Transverse colon (tissue), 4 donors: ENCODE measurements at regions of chr9 and their contacts with region 1.

Region 1: GRCh38 chr9:115013998-115014397 is 83.6 kb upstream of the TNFSF8 start:
- DNase-seq: peak; percentile 76
- H3K4me3 ChIP-seq: no peak overlapping the region
- H3K27ac ChIP-seq: no peak overlapping the region
- H3K4me1 ChIP-seq: peaks cover 0 to 6% (median 0%) of the 10 kb centered on the region in 4 donors
- H3K27me3 ChIP-seq: no peaks in the 10 kb centered on the region
- CTCF ChIP-seq: peak; percentile 71 to 87 (median 79)
- EP300 ChIP-seq: no peak
- POLR2A ChIP-seq: no peak

Region 2: DNA sequence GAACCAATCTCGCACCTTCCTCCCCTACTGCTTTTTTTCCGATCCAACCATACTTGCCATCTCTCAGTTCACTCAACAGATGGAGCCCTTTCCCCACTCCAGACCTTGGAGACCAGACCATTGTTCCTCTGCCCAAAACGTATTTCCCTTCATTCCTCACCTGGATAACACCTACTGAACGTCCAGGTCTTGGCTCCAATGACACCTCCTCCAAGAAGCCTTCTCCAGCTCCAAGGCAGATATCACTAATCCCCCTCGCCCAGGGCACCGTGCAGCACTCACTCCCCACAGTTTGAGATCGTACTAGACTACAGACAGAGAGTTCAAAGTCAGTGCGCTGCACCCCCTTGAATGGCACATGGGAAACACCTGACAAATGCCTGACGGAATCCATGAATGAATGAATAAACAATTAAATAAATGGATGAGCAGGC is 579.1 kb before region 1 on chr9:
- in situ Hi-C with region 1: loop called in 1 of 4 experiments (anchors 25 kb)
- intact Hi-C with region 1: no loop called
- DNase-seq: no peak
- H3K4me3 ChIP-seq: no peak overlapping the region
- H3K27ac ChIP-seq: no peak overlapping the region
- H3K4me1 ChIP-seq: no peaks in the 10 kb centered on the region
- H3K27me3 ChIP-seq: no peaks in the 10 kb centered on the region
- CTCF ChIP-seq: peak in 4 of 5 experiments; percentile 19 to 29 (median 26)
- EP300 ChIP-seq: no peak
- POLR2A ChIP-seq: no peak

Region 3: GRCh38 chr9:114497236-114497635 is 516.8 kb before region 1 on chr9:
- in situ Hi-C with region 1: no loop called
- intact Hi-C with region 1: no loop called
- DNase-seq: no peak
- H3K4me3 ChIP-seq: no peak overlapping the region
- H3K27ac ChIP-seq: no peak overlapping the region
- H3K4me1 ChIP-seq: peaks cover 0 to 6% (median 3%) of the 10 kb centered on the region in 4 donors
- H3K27me3 ChIP-seq: no peaks in the 10 kb centered on the region
- CTCF ChIP-seq: no peak
- EP300 ChIP-seq: no peak
- POLR2A ChIP-seq: no peak

Region 4: GRCh38 chr9:114687034-114687433 is 327.0 kb before region 1 on chr9:
- in situ Hi-C with region 1: loop called in 1 of 4 experiments (anchors 5 kb)
- intact Hi-C with region 1: loop called (anchors 5 kb)
- DNase-seq: no peak
- H3K4me3 ChIP-seq: no peak overlapping the region
- H3K27ac ChIP-seq: no peak overlapping the region
- H3K4me1 ChIP-seq: no peaks in the 10 kb centered on the region
- H3K27me3 ChIP-seq: no peaks in the 10 kb centered on the region
- CTCF ChIP-seq: no peak
- EP300 ChIP-seq: no peak
- POLR2A ChIP-seq: no peak

Region 5: DNA sequence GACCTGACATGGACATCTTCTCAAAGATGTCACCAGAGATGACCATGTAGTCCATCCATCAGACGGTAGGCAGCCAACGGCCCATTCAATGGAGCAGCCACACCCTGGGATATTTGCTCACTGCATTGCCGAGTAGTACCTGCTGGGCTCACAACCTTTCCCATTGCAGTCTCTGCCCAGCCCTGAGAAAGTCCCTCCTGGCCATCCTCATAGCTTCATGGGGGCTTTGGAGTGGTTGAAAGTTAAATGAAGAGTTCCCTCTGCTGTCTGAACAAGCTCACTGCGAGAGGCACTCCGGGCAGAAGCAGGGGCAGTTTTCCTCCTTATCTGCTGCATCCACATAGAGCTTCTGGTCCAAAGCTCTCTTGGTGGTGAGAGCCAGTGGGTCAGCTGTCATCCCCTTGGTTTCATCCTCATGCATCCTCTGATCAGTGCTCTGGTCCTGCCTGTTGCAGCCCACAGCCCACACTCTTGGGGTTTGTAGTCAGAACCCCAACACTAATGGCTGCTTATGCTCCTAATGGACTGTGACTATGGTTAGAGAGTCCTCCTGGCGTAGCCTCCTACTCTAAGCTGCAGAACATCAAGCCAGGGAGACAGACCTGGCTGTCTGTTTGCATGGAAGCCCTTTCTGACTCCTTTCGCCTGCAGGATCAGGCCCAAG is 107.0 kb before region 1 on chr9:
- in situ Hi-C with region 1: loop called in 3 of 4 experiments (anchors 5 kb)
- intact Hi-C with region 1: no loop called
- DNase-seq: no peak
- H3K4me3 ChIP-seq: no peak overlapping the region
- H3K27ac ChIP-seq: peak overlapping the region in 1 of 4 donors; percentile 40
- H3K4me1 ChIP-seq: peaks cover 0 to 29% (median 9%) of the 10 kb centered on the region in 4 donors
- H3K27me3 ChIP-seq: no peaks in the 10 kb centered on the region
- CTCF ChIP-seq: peak; percentile 29 to 61 (median 41)
- EP300 ChIP-seq: no peak
- POLR2A ChIP-seq: no peak

Region 6: GRCh38 chr9:114958021-114958843 is 55.8 kb before region 1 on chr9:
- in situ Hi-C with region 1: no loop called
- intact Hi-C with region 1: no loop called
- DNase-seq: peak; percentile 17
- H3K4me3 ChIP-seq: no peak overlapping the region
- H3K27ac ChIP-seq: peak overlapping the region in 2 of 4 donors; percentile 18 to 23
- H3K4me1 ChIP-seq: peaks cover 0 to 4% (median 1%) of the 10 kb centered on the region in 4 donors
- H3K27me3 ChIP-seq: no peaks in the 10 kb centered on the region
- CTCF ChIP-seq: no peak
- EP300 ChIP-seq: no peak
- POLR2A ChIP-seq: no peak

Region 7: DNA sequence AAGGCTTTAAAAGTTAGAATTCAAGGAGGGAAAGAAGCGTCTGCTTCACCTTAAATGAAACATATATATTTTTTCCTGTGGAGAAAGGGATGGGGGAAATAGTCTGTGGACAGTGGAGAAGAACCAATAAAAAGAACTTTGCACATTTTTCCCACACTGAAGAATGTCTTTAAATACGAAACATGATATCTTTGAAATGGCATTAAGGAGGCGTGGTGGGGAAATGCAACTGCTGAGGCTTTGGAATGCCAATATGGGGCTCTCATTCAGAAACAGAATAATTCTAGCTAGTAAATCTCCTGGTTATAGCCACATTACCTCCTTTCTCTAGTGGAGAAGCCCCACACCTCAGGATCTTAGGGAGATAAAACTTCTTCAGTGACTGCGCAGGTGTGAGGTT is 57.2 kb after region 1 on chr9:
- in situ Hi-C with region 1: no loop called
- intact Hi-C with region 1: no loop called
- DNase-seq: no peak
- H3K4me3 ChIP-seq: no peak overlapping the region
- H3K27ac ChIP-seq: peak overlapping the region in 3 of 4 donors; percentile 11 to 69 (median 52)
- H3K4me1 ChIP-seq: peaks cover 0 to 12% (median 7%) of the 10 kb centered on the region in 4 donors
- H3K27me3 ChIP-seq: no peaks in the 10 kb centered on the region
- CTCF ChIP-seq: no peak
- EP300 ChIP-seq: no peak
- POLR2A ChIP-seq: no peak